ENCODE measurements at regions of chr1 and their contacts with region 1.

Region 1: GRCh38 chr1:58047265-58047858 is 499.2 kb downstream of the OMA1 start:
- DNase-seq: peak; percentile 70
- H3K4me3 Mint-ChIP-seq: no peak overlapping the region
- H3K27ac Mint-ChIP-seq: no peak overlapping the region
- H3K4me1 Mint-ChIP-seq: no peaks in the 10 kb centered on the region
- H3K27me3 Mint-ChIP-seq: peaks cover 4% of the 10 kb centered on the region

Region 2: DNA sequence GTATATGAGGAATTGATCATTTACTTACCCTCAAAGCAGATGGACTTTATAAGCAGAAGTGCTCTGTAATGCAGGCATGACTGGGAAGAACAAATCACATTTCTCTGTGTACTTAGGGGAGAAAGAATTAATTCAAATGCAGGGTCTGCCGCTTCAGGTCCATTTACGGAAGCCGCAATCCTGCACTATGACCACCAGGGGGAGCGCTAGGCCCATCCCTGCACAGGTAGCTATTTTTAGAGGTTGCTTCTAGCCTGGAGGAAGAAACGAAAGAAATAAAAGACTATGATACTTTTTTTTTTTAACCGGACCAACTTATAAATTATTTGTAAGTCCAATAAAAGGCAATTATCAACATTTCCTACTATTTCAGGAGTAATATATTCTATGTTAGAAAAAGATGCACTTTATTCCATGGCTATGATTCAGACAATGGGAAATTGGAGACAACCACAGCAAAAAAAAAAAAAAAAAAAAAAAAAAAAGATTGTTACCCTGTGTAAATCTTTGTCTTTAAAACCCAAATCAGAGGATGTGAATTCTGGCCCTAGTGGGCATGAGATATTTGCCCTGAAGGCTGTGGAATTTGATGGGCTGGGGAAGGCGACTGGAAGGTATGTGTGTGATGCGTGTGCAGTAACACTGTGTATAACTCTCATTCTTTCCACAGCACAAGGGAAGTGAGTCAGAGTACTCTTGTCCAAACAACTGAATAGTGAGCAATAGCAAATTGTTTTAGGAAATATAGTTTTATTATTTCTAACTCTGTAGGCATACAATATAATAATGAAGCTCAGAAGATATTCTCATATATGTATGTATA is 1215.3 kb before region 1 on chr1:
- intact Hi-C with region 1: loop called (anchors 10 kb)
- DNase-seq: peak; percentile 89
- H3K4me3 Mint-ChIP-seq: no peak overlapping the region
- H3K27ac Mint-ChIP-seq: no peak overlapping the region
- H3K4me1 Mint-ChIP-seq: no peaks in the 10 kb centered on the region
- H3K27me3 Mint-ChIP-seq: no peaks in the 10 kb centered on the region

Region 3: DNA sequence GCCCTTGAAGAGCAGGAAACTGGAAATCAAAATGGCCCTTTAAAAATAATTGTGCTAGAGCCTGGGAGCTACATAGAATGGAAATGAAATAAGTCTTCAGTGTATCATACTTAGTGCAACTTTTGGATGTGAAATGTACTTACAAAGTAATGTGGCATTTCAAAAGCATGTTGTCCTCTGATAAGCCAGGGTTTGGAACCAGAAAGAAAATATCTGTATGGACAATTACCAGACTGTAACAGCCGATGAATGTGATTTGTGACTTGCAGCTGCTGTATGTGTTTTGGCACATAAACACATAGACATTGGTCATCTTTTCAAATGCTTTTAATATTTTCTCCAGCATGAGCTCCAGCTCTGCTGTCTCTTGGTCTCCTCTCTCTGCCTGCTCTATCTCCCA is 47.2 kb before region 1 on chr1:
- intact Hi-C with region 1: no loop called
- DNase-seq: no peak
- H3K4me3 Mint-ChIP-seq: no peak overlapping the region
- H3K27ac Mint-ChIP-seq: no peak overlapping the region
- H3K4me1 Mint-ChIP-seq: no peaks in the 10 kb centered on the region
- H3K27me3 Mint-ChIP-seq: peaks cover 2% of the 10 kb centered on the region

Region 4: GRCh38 chr1:58546520-58547308 is 499.4 kb after region 1 on chr1 and contains the start of gene OMA1:
- intact Hi-C with region 1: no loop called
- DNase-seq: peak; percentile 99
- H3K4me3 Mint-ChIP-seq: peak within 1 kb of the TSS; percentile 90
- H3K27ac Mint-ChIP-seq: peak within 1 kb of the TSS; percentile 92
- H3K4me1 Mint-ChIP-seq: peaks cover 22% of the 10 kb centered on the region
- H3K27me3 Mint-ChIP-seq: peaks cover 12% of the 10 kb centered on the region
- total RNA-seq, gene OMA1: 10.6 and 13.8 TPM in 2 replicates